Vagina (tissue), 2 donors: ENCODE measurements at regions of chr7 and their contacts with region 1.

Region 1: GRCh38 chr7:149067876-149068275 is 22.6 kb downstream of the ZNF786 start:
- DNase-seq: no peak
- H3K4me3 ChIP-seq: no peak overlapping the region
- H3K27ac ChIP-seq: no peak overlapping the region
- H3K4me1 ChIP-seq: peaks cover 6% of the 10 kb centered on the region
- H3K27me3 ChIP-seq: no peaks in the 10 kb centered on the region
- CTCF ChIP-seq: no peak
- POLR2A ChIP-seq: no peak

Region 2: GRCh38 chr7:147911201-147911601 is 1156.7 kb before region 1 on chr7:
- intact Hi-C with region 1: no loop called
- DNase-seq: no peak
- H3K4me3 ChIP-seq: no peak overlapping the region
- H3K27ac ChIP-seq: no peak overlapping the region
- H3K4me1 ChIP-seq: no peaks in the 10 kb centered on the region
- H3K27me3 ChIP-seq: no peaks in the 10 kb centered on the region
- CTCF ChIP-seq: no peak
- POLR2A ChIP-seq: no peak

Region 3: GRCh38 chr7:148584154-148584827 is 483.6 kb before region 1 on chr7:
- intact Hi-C with region 1: no loop called
- DNase-seq: no peak
- H3K4me3 ChIP-seq: no peak overlapping the region
- H3K27ac ChIP-seq: no peak overlapping the region
- H3K4me1 ChIP-seq: no peaks in the 10 kb centered on the region
- H3K27me3 ChIP-seq: no peaks in the 10 kb centered on the region
- CTCF ChIP-seq: no peak
- POLR2A ChIP-seq: no peak

Region 4: GRCh38 chr7:149005241-149006050 is 62.4 kb before region 1 on chr7:
- intact Hi-C with region 1: loop called (anchors 10 kb)
- DNase-seq: no peak
- H3K4me3 ChIP-seq: no peak overlapping the region
- H3K27ac ChIP-seq: no peak overlapping the region
- H3K4me1 ChIP-seq: no peaks in the 10 kb centered on the region
- H3K27me3 ChIP-seq: no peaks in the 10 kb centered on the region
- CTCF ChIP-seq: peak; percentile 87 to 92 (median 89)
- POLR2A ChIP-seq: no peak

Region 5: DNA sequence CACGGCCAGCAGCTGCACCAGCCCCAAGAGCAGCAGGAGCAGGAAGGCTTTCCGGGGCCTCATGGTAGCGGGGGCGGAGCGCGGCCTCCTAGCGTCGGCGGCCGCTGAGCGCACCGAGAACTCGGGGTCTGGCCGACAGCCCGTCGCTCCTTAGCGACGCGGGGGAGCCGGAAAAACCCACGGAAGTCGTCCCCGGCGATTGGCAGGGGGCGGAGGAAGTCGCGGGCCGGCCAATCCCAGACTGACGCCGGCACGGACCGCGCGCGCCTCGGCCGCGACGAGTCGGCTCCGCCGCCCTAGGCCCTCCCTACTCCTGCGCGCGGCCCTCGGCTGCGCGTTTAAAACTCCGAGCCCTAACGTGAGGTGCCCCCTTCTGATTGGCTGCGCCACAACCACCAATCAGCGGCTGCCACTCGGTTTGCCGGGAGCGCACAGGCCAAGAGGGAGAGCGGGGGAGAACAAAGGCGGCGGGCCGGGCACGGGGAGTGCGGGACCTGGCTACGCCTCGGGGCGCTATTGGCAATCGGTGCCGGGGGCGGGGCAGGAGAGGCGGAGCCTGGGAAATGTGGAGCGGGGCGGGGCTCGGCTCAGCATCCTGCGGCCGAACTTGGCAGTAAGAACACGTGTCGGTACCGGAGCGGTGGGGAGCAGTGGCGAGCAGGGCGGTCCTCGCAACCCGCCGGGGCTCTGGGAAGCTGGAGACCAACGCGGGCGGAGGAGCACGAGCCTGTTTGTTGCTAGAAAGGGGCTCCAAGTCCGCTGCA is 39.3 kb before region 1 on chr7 and contains the start of gene PDIA4:
- intact Hi-C with region 1: loop called (anchors 2 kb)
- DNase-seq: peak; percentile 99
- H3K4me3 ChIP-seq: peak within 1 kb of the TSS; percentile 79 to 88
- H3K27ac ChIP-seq: peak within 1 kb of the TSS; percentile 74
- H3K4me1 ChIP-seq: peaks cover 32% of the 10 kb centered on the region
- H3K27me3 ChIP-seq: no peaks in the 10 kb centered on the region
- CTCF ChIP-seq: peak in 1 of 3 experiments; percentile 20
- POLR2A ChIP-seq: peak in 1 of 2 donors; percentile 48
- total RNA-seq, gene PDIA4: 69.5 TPM